OCI-LY7 (cell line): ENCODE measurements at regions of chr15 and their contacts with region 1.

Region 1: GRCh38 chr15:100918034-100918689 is 995 bp upstream of the LRRK1 start:
- DNase-seq: peak; percentile 92
- H3K4me3 ChIP-seq: peak overlapping the region; percentile 91
- H3K27ac ChIP-seq: peak overlapping the region; percentile 92
- H3K4me1 ChIP-seq: peaks cover 51% of the 10 kb centered on the region
- CTCF ChIP-seq: peak; percentile 92

Region 2: DNA sequence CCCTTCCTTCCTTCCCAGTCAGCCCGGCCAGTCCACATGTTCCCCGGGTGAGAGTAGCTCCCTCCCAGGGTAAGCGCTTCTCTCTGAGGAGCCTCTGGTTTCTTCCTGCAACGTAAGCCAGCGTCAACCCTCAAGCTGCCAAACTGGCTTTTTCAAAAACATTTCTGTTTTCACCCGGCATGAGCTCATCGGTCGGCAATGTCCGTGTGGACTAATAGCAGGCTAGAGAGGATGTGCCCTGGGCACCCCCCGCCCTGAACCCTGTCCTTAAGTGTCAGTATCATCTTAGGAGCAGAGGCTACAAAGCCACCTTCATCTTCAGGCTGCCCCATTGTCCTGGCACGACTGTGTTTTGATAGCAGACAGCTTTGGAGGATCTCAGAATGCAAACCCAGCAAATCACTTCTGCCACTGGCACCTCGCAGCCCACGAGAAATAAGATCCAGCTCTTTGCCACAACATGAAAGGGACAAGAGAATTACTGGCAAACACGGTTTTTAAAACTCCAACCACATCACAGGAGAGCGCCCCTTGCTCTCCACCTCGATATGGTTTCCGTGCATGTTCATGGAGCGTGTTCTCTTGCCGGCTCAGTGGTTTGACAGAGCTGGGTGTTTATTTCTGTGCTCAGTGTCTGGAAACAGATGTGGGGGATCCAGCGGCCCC is 28.6 kb before region 1 on chr15:
- CTCF ChIA-PET with region 1: no interaction called
- POLR2A ChIA-PET with region 1: no interaction called
- intact Hi-C with region 1: no loop called
- DNase-seq: no peak
- H3K4me3 ChIP-seq: no peak overlapping the region
- H3K27ac ChIP-seq: no peak overlapping the region
- H3K4me1 ChIP-seq: no peaks in the 10 kb centered on the region
- CTCF ChIP-seq: no peak

Region 3: GRCh38 chr15:100902436-100903167 is 15.6 kb before region 1 on chr15:
- CTCF ChIA-PET with region 1: no interaction called
- POLR2A ChIA-PET with region 1: interaction called, 13 read pairs
- intact Hi-C with region 1: no loop called
- DNase-seq: peak; percentile 30
- H3K4me3 ChIP-seq: no peak overlapping the region
- H3K27ac ChIP-seq: no peak overlapping the region
- H3K4me1 ChIP-seq: peaks cover 14% of the 10 kb centered on the region
- CTCF ChIP-seq: no peak

Region 4: DNA sequence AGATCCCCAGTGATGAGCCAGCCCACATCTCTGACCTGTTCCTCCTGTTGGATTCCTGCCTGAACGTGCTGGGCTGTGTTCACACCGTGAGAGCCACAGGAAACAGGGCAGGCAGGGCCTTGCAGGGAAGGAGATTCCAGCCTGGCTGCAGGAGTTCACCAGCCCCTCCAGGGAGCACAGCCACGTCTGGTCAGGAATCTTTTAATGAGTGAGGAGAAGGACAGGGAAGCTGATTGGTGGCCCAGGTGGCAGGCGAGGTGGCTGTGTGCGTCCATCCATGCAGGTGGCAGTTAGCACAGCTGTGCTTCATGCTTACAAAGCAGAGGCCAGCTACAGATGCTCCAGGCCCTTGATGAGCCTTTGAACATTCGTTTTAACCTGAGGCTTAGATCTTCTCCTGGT is 11.5 kb after region 1 on chr15:
- CTCF ChIA-PET with region 1: interaction called, 6 read pairs
- POLR2A ChIA-PET with region 1: interaction called, 134 read pairs
- intact Hi-C with region 1: loop called (anchors 1 kb)
- DNase-seq: peak; percentile 92
- H3K4me3 ChIP-seq: peak overlapping the region; percentile 53
- H3K27ac ChIP-seq: peak overlapping the region; percentile 99
- H3K4me1 ChIP-seq: peaks cover 99% of the 10 kb centered on the region
- CTCF ChIP-seq: no peak

Region 5: GRCh38 chr15:100934726-100935125 is 16.6 kb after region 1 on chr15:
- CTCF ChIA-PET with region 1: interaction called, 6 read pairs
- POLR2A ChIA-PET with region 1: interaction called, 134 read pairs
- intact Hi-C with region 1: loop called (anchors 1 kb)
- DNase-seq: peak; percentile 80
- H3K4me3 ChIP-seq: peak overlapping the region; percentile 20
- H3K27ac ChIP-seq: peak overlapping the region; percentile 99
- H3K4me1 ChIP-seq: peaks cover 95% of the 10 kb centered on the region
- CTCF ChIP-seq: peak; percentile 68